ENCODE measurements at regions of chr16 and their contacts with region 1.

Region 1: GRCh38 chr16:56643080-56643778 is 4.8 kb downstream of the MT1A start:
- DNase-seq: peak; percentile 88
- H3K4me3 Mint-ChIP-seq: peak overlapping the region; percentile 64
- H3K27ac Mint-ChIP-seq: no peak overlapping the region
- H3K4me1 Mint-ChIP-seq: peaks cover 28% of the 10 kb centered on the region
- H3K27me3 Mint-ChIP-seq: peaks cover 91% of the 10 kb centered on the region

Region 2: GRCh38 chr16:56382901-56383355 is 260.3 kb before region 1 on chr16:
- CTCF ChIA-PET with region 1: no interaction called
- DNase-seq: no peak
- H3K4me3 Mint-ChIP-seq: no peak overlapping the region
- H3K27ac Mint-ChIP-seq: no peak overlapping the region
- H3K4me1 Mint-ChIP-seq: no peaks in the 10 kb centered on the region
- H3K27me3 Mint-ChIP-seq: no peaks in the 10 kb centered on the region

Region 3: DNA sequence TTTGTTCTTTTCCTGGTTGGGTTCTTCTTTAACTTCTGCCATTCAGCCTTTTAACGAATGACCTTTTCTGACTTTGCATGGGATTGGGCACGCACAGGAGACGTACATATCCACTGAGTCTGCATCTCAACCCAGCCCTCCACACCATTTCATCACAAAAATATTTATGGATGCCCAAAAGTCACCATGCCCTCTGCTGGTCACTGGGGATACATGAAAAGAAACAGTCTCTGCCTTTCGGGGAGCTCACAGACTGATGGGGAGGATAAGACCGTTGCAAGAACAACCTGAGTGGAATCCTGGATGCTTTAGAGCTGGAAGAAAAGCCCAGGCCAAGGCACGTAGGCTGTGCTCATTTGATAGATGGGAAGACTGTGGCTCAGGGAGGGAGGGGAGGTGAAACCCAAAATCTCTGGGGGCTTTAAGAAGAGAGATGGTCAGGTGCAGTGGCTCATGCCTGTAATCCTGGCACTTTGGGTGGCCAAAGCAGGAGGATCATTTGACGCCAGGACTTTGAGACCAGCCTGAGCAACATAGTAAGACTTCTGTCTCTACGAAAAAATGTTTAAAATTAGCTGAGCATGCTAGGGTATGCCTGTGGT is 42.7 kb before region 1 on chr16:
- CTCF ChIA-PET with region 1: interaction called, 14 read pairs
- DNase-seq: peak; percentile 55
- H3K4me3 Mint-ChIP-seq: no peak overlapping the region
- H3K27ac Mint-ChIP-seq: no peak overlapping the region
- H3K4me1 Mint-ChIP-seq: peaks cover 8% of the 10 kb centered on the region
- H3K27me3 Mint-ChIP-seq: peaks cover 54% of the 10 kb centered on the region

Region 4: DNA sequence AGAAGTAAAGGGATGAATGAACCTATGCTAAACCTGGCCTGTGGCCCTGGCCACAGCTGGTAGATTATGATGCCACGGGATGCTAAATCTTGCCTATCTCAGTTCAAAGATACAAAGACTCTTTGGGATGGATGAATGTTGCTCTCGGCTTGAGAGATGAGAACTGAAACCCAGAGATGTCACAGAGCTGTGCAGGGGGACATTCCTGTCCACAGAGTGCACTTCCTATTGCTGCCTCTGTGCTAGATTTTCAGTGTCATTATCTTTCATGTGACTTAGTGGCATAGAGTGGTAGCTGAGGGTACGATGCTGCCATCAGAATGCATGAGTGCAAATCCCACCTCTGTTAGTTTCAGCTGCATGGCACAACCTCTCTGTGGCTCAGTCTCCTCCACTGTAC is 13.1 kb before region 1 on chr16:
- CTCF ChIA-PET with region 1: interaction called, 12 read pairs
- DNase-seq: no peak
- H3K4me3 Mint-ChIP-seq: no peak overlapping the region
- H3K27ac Mint-ChIP-seq: no peak overlapping the region
- H3K4me1 Mint-ChIP-seq: peaks cover 32% of the 10 kb centered on the region
- H3K27me3 Mint-ChIP-seq: peaks cover 93% of the 10 kb centered on the region

Region 5: GRCh38 chr16:56814537-56815432 is 171.6 kb after region 1 on chr16:
- CTCF ChIA-PET with region 1: no interaction called
- DNase-seq: no peak
- H3K4me3 Mint-ChIP-seq: no peak overlapping the region
- H3K27ac Mint-ChIP-seq: no peak overlapping the region
- H3K4me1 Mint-ChIP-seq: no peaks in the 10 kb centered on the region
- H3K27me3 Mint-ChIP-seq: no peaks in the 10 kb centered on the region